SK-N-SH (cell line): ENCODE measurements at regions of chr15 and their contacts with region 1.

Region 1: DNA sequence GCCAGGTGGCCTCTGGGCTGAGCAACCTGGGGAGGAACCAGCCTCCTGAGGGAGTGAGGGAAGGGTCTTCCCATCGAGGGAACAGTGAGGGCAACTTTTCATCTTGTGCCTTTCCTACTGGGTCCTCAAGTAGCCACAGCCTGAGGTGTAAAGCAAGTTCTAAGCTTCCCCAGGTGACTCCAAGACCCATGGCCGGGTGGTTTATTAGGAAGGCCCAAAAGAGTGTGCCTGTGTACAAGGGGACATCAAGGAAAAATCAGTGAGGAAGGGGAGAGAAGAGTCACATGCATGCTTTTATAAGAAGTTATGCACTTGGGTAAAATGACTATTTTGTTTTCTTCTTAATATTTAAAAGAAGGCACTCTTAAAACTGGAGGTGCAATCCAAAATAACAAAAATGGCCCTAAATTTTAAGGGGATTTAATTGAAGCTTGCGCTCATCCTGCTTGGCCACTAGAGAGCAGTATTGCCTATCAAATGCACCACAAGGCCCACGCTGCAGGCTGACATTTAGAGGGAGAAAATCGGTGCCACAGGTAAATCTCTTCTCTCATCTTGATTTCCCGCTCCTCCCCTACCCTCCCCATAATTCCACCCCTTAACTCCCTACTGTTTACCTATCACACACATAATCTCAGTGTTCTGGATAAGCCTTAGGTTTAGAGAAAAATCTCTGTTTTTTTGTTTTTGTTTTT is 6.7 kb downstream of the NANOGP8 start:
- DNase-seq: peak; percentile 75
- H3K4me3 ChIP-seq: no peak overlapping the region; a peak in 1 of 4 replicates
- H3K27ac ChIP-seq: no peak overlapping the region
- H3K4me1 ChIP-seq: no peaks in the 10 kb centered on the region
- H3K27me3 ChIP-seq: no peaks in the 10 kb centered on the region
- CTCF ChIP-seq: peak; percentile 96
- EP300 ChIP-seq: no peak
- RAD21 ChIP-seq: peak; percentile 98

Region 2: GRCh38 chr15:35089551-35089950 is 11.2 kb after region 1 on chr15:
- CTCF ChIA-PET with region 1: interaction called, 20 read pairs
- POLR2A ChIA-PET with region 1: no interaction called
- DNase-seq: no peak
- H3K4me3 ChIP-seq: no peak overlapping the region
- H3K27ac ChIP-seq: no peak overlapping the region
- H3K4me1 ChIP-seq: no peaks in the 10 kb centered on the region
- H3K27me3 ChIP-seq: no peaks in the 10 kb centered on the region
- CTCF ChIP-seq: no peak
- EP300 ChIP-seq: no peak
- RAD21 ChIP-seq: no peak